Natural killer cell (primary cell): ENCODE measurements at regions of chr1 and their contacts with region 1.

Region 1: GRCh38 chr1:221741711-221742554 is at the start of gene DUSP10:
- DNase-seq: peak; percentile 98 to 99
- ATAC-seq: peak; percentile 78 to 92 (median 79)
- H3K4me3 ChIP-seq: peak within 1 kb of the TSS; percentile 83
- H3K4me3 Mint-ChIP-seq: no peak within 1 kb of the TSS
- H3K27ac ChIP-seq: peak within 1 kb of the TSS; percentile 99
- H3K27ac Mint-ChIP-seq: no peak within 1 kb of the TSS
- H3K4me1 ChIP-seq: peaks cover 41% of the 10 kb centered on the region
- H3K4me1 Mint-ChIP-seq: peaks cover 10 to 11% of the 10 kb centered on the region in 2 donors
- H3K27me3 ChIP-seq: no peaks in the 10 kb centered on the region
- H3K27me3 Mint-ChIP-seq: no peaks in the 10 kb centered on the region
- CTCF ChIP-seq: no peak
- total RNA-seq, gene DUSP10: 109 to 231 (median 210) TPM

Region 2: GRCh38 chr1:221655766-221656305 is 86.1 kb before region 1 on chr1:
- intact Hi-C with region 1: loop called (anchors 10 kb)
- DNase-seq: no peak
- ATAC-seq: peak; percentile 50 to 89 (median 61)
- H3K4me3 ChIP-seq: no peak overlapping the region
- H3K4me3 Mint-ChIP-seq: peak overlapping the region; percentile 66
- H3K27ac ChIP-seq: peak overlapping the region; percentile 2
- H3K27ac Mint-ChIP-seq: peak overlapping the region; percentile 43 to 45
- H3K4me1 ChIP-seq: peaks cover 20% of the 10 kb centered on the region
- H3K4me1 Mint-ChIP-seq: peaks cover 24 to 29% of the 10 kb centered on the region in 2 donors
- H3K27me3 ChIP-seq: no peaks in the 10 kb centered on the region
- H3K27me3 Mint-ChIP-seq: no peaks in the 10 kb centered on the region
- CTCF ChIP-seq: no peak

Region 3: DNA sequence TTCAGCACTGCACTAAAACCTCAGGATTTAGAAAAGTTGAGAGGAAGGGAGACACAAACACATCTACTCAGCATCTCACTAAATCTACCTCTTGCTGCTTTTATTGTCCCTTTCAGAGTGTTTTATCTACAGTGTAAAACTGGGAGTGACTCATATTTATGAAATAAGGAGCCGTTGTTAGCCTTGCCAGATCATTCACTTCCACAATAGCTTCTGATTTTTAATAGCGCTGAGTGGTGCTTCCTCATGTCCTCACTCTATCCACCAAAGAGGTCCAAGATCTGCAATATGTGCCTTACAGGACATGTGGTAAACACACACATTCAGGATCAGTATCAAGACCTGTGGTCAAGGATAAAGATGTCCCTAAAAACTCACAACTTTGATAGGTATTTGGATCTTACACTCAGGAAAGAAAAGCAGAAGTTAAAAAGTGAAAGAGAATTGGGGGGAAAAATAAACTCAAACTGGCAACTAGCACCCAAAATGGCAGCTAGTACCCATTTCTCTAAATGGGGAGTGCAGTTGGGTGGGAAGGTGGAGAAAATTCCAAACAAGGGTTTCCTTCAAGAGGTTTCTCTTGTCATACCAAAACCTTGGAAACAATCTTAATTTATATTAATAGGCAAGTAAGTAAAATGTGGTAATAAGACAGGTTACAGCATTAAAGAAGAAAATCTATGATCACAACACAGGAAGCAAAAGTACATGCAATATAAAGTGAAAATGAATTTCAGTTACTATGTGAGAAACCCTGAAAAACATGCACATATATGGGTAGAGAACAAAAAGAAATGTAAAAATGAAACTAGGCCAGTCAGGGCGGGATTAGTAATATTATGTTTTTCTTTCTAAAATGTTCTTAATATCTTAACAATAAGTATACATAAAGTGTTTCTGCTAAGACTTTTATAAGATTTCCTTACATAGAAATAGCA is 15.9 kb before region 1 on chr1:
- intact Hi-C with region 1: loop called (anchors 2 kb)
- DNase-seq: peak in 1 of 2 donors; percentile 45
- ATAC-seq: peak; percentile 46 to 77 (median 58)
- H3K4me3 ChIP-seq: no peak overlapping the region
- H3K4me3 Mint-ChIP-seq: peak overlapping the region; percentile 74
- H3K27ac ChIP-seq: peak overlapping the region; percentile 77
- H3K27ac Mint-ChIP-seq: peak overlapping the region; percentile 82 to 88
- H3K4me1 ChIP-seq: peaks cover 46% of the 10 kb centered on the region
- H3K4me1 Mint-ChIP-seq: peaks cover 81 to 91% of the 10 kb centered on the region in 2 donors
- H3K27me3 ChIP-seq: no peaks in the 10 kb centered on the region
- H3K27me3 Mint-ChIP-seq: no peaks in the 10 kb centered on the region
- CTCF ChIP-seq: no peak

Region 4: DNA sequence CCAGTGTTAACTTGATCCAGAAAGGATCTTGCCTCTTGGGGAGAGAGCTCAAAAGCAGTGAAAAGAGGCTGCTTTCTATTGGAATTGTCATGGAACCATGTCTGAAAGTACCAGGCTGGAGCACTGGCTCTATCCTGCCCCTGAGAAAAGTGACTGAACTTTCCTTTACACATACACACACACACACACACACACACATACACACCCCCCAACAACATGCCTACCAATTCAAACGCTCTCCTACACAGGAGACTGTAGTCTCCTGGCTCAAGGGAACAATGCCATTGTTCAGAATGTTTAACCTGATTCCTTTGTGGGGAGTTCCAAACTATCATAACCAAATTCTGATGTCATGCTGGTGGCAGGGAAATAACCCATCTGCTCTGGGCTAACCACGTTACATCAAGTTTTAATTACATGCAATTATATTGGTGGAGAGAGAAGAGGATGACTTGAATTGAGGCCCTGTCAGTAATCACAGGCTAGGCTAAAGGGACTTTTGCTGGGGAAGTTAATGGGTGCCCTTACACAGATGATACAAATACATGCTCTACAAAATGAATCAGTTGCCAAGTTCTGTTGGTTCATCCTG is 52.2 kb after region 1 on chr1:
- intact Hi-C with region 1: loop called (anchors 1 kb)
- DNase-seq: peak in 1 of 2 donors; percentile 79
- ATAC-seq: peak; percentile 76 to 89 (median 82)
- H3K4me3 ChIP-seq: no peak overlapping the region
- H3K4me3 Mint-ChIP-seq: peak overlapping the region; percentile 65
- H3K27ac ChIP-seq: peak overlapping the region; percentile 57
- H3K27ac Mint-ChIP-seq: peak overlapping the region; percentile 88 to 90
- H3K4me1 ChIP-seq: peaks cover 16% of the 10 kb centered on the region
- H3K4me1 Mint-ChIP-seq: peaks cover 19 to 26% of the 10 kb centered on the region in 2 donors
- H3K27me3 ChIP-seq: no peaks in the 10 kb centered on the region
- H3K27me3 Mint-ChIP-seq: no peaks in the 10 kb centered on the region
- CTCF ChIP-seq: no peak

Region 5: DNA sequence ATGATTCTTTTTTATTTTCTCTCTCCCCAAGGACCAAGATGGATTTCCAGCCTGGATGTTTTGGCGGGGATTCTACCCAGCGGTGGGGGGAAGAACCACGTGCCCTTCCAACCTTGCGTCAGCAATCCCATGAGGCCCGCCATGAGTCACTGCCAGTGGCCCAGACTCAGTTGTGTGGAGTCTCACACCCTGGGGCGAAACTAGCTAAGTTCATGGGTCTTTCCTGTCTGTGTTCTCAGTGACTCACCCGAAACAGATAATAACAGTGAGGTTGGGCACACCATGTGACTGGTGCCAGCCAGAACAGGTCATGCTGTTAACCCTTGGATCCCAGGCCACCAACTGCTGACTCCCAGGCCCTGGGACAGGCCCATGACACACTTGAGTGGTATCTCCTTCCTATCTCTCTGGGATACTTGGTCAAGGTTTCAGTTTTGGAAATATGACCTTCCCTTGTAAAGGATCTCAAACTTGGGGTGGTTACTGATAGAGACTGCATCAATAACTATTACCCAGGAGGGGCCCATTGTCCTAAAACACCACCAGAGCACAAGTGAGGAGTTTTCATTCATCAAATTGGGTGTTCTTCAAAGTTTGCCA is 98.0 kb after region 1 on chr1:
- intact Hi-C with region 1: loop called (anchors 1 kb)
- DNase-seq: peak; percentile 82 to 86
- ATAC-seq: peak; percentile 82 to 94 (median 93)
- H3K4me3 ChIP-seq: no peak overlapping the region
- H3K4me3 Mint-ChIP-seq: peak overlapping the region; percentile 13
- H3K27ac ChIP-seq: peak overlapping the region; percentile 34
- H3K27ac Mint-ChIP-seq: peak overlapping the region; percentile 89 to 92
- H3K4me1 ChIP-seq: peaks cover 28% of the 10 kb centered on the region
- H3K4me1 Mint-ChIP-seq: peaks cover 37 to 43% of the 10 kb centered on the region in 2 donors
- H3K27me3 ChIP-seq: no peaks in the 10 kb centered on the region
- H3K27me3 Mint-ChIP-seq: peaks cover 0 to 3% of the 10 kb centered on the region in 2 donors
- CTCF ChIP-seq: no peak